ENCODE measurements at regions of chr17 and their contacts with region 1.

Region 1: DNA sequence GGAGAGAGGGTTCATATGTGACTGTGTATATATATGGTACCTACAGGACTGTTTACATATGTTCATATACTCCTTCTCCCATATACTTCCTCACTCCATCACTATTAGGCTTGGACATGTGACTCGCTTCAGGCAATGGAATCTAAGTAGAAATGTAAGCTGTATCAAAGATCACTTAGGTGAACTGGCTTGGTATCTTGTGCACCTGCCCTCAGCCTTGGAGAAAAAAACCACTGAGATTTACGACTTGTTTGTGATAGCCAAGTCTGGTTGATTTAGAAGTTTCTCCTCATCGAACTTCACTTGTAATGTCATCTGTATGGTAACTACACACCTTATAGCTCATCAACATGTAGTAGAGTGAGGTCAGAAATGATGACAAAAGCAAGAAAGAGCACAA is 59.9 kb downstream of the FBXL20 start:
- DNase-seq: no peak
- ATAC-seq: no peak
- H3K4me3 ChIP-seq: no peak overlapping the region
- H3K27ac ChIP-seq: no peak overlapping the region
- H3K4me1 ChIP-seq: no peaks in the 10 kb centered on the region
- H3K27me3 ChIP-seq: no peaks in the 10 kb centered on the region
- CTCF ChIP-seq: no peak
- EP300 ChIP-seq: no peak
- POLR2A ChIP-seq: no peak
- RAD21 ChIP-seq: no peak

Region 2: GRCh38 chr17:39281806-39282205 is 59.7 kb before region 1 on chr17:
- CTCF ChIA-PET with region 1: no interaction called
- POLR2A ChIA-PET with region 1: no interaction called
- RAD21 ChIA-PET with region 1: no interaction called
- SMC1A ChIA-PET with region 1: no interaction called
- in situ Hi-C with region 1: no loop called
- intact Hi-C with region 1: loop called (anchors 10 kb)
- DNase-seq: no peak
- ATAC-seq: no peak
- H3K4me3 ChIP-seq: no peak overlapping the region
- H3K27ac ChIP-seq: no peak overlapping the region
- H3K4me1 ChIP-seq: no peaks in the 10 kb centered on the region
- H3K27me3 ChIP-seq: no peaks in the 10 kb centered on the region
- CTCF ChIP-seq: no peak
- EP300 ChIP-seq: no peak
- POLR2A ChIP-seq: no peak
- RAD21 ChIP-seq: no peak

Region 3: GRCh38 chr17:39380144-39380543 is 38.6 kb after region 1 on chr17:
- CTCF ChIA-PET with region 1: no interaction called
- POLR2A ChIA-PET with region 1: no interaction called
- RAD21 ChIA-PET with region 1: no interaction called
- SMC1A ChIA-PET with region 1: no interaction called
- in situ Hi-C with region 1: no loop called
- intact Hi-C with region 1: no loop called
- DNase-seq: no peak
- ATAC-seq: no peak
- H3K4me3 ChIP-seq: no peak overlapping the region
- H3K27ac ChIP-seq: no peak overlapping the region
- H3K4me1 ChIP-seq: peaks cover 16% of the 10 kb centered on the region
- H3K27me3 ChIP-seq: no peaks in the 10 kb centered on the region
- CTCF ChIP-seq: no peak
- EP300 ChIP-seq: no peak
- POLR2A ChIP-seq: no peak
- RAD21 ChIP-seq: no peak

Region 4: DNA sequence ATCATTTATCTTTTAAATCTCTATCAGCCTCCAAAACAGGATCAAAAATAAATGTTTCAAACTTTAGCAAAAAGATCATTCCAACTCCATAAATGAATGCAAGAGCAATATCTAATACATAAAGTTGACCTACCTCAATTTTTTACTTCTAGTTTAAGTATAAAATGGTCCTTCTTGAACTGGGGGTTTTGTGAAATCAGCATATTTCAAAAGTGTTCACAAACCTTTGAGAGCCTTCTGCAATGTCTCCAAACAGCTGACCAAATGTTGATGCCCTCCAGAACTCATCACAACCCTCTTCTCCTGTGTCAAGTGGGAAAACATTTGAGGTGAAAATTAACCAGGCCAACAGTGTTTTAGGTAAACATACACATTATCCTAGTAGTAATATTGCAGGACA is 101.8 kb after region 1 on chr17:
- CTCF ChIA-PET with region 1: no interaction called
- POLR2A ChIA-PET with region 1: no interaction called
- RAD21 ChIA-PET with region 1: no interaction called
- SMC1A ChIA-PET with region 1: no interaction called
- in situ Hi-C with region 1: no loop called
- intact Hi-C with region 1: no loop called
- DNase-seq: no peak
- ATAC-seq: no peak
- H3K4me3 ChIP-seq: no peak overlapping the region
- H3K27ac ChIP-seq: no peak overlapping the region
- H3K4me1 ChIP-seq: no peaks in the 10 kb centered on the region
- H3K27me3 ChIP-seq: no peaks in the 10 kb centered on the region
- CTCF ChIP-seq: no peak
- EP300 ChIP-seq: no peak
- POLR2A ChIP-seq: no peak
- RAD21 ChIP-seq: no peak

Measured in GM12878 (cell line).